Psoas muscle (tissue), 8 donors: ENCODE measurements at regions of chr17 and their contacts with region 1.

Region 1: GRCh38 chr17:40479533-40480480 is 21.6 kb downstream of the TNS4 start:
- DNase-seq: no peak
- ATAC-seq: no peak
- H3K4me3 ChIP-seq: no peak overlapping the region
- H3K27ac ChIP-seq: no peak overlapping the region
- H3K4me1 ChIP-seq: no peaks in the 10 kb centered on the region
- H3K27me3 ChIP-seq: no peaks in the 10 kb centered on the region
- CTCF ChIP-seq: no peak

Region 2: GRCh38 chr17:40437095-40437732 is 42.6 kb before region 1 on chr17:
- intact Hi-C with region 1: loop called (anchors 5 kb)
- DNase-seq: no peak
- ATAC-seq: no peak
- H3K4me3 ChIP-seq: no peak overlapping the region
- H3K27ac ChIP-seq: no peak overlapping the region
- H3K4me1 ChIP-seq: no peaks in the 10 kb centered on the region
- H3K27me3 ChIP-seq: no peaks in the 10 kb centered on the region
- CTCF ChIP-seq: no peak

Region 3: DNA sequence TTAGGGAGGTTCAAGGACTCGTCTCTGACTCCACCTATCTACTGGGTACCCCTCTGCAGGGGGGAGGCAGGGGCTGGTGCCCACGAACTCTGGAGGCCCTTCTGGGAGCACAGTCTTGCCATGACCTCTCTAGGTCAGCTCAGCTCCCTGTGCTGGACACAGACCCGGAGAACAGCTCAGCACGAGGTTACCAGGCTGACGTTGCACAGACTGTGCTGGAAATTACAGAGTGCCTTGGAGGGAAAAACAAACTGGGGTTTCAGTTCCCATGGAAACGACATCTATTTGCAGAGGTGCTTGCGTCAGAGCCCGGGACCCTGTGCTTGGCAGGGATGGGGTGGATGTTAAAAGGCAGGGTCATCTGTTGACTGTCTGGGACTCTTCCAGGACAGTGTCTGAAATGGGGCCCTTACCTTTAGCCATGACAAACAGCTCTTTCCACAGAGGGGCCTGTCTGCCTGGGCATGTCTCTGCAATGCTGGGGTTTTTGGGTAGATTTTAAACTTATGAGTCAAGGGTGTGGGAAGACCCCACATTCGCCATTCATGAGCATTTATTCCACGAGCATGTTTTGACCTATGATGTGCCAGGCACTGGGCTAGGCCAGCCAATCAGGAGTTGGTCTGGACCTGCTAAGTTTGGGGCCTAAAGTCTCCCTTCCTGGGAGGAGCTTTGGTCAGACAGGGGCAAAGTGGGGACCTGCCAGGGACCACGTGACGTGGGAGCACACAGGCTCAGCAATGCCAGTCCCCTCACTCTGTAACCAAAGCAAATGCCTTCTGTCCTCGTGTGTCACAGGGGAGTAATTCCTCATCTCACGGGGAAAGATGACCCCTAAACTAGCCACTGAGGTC is 63.0 kb after region 1 on chr17:
- intact Hi-C with region 1: no loop called
- DNase-seq: peak; percentile 88 to 89
- ATAC-seq: peak; percentile 43 to 79 (median 68)
- H3K4me3 ChIP-seq: no peak overlapping the region
- H3K27ac ChIP-seq: peak overlapping the region; percentile 78
- H3K4me1 ChIP-seq: peaks cover 42% of the 10 kb centered on the region
- H3K27me3 ChIP-seq: no peaks in the 10 kb centered on the region
- CTCF ChIP-seq: no peak